B cell (primary cell): ENCODE measurements at regions of chr16 and their contacts with region 1.

Region 1: DNA sequence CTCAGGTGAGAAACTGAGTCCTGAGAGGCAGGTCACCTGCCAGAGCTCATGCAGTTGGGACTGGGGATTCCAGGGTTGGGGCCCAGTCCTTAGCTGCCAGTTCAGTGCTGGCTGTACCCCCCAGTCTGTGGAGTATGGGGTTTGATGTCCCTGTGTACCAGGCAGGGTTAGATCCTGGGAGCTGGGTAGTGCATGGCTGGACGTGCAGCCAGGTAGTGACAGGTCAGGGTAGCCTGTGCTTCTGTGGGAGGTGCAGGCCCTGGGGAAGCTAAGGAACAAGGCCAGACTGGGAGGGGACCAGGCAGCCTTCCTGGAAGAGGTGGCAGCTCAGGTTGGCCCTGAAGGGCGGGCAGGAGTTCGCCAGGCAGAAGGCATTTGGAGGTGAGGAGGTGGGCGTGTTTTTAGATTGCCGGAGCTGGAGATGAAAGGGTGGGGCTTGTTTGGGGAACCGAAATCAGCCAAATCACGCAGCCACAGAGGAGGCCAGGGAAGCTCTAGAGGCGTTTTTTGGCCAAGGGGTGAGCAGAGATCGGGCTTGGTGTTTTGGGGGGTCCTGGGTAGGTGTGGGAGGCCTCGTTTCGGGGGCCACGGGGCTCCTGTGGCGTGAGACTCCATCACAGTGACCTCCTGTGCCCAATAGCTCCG is 7.5 kb downstream of the ADCY7 start:
- DNase-seq: peak; percentile 88
- ATAC-seq: peak; percentile 81
- H3K4me3 ChIP-seq: peak overlapping the region; percentile 12 to 84 (median 80)
- H3K4me3 Mint-ChIP-seq: peak overlapping the region; percentile 98
- H3K27ac ChIP-seq: peak overlapping the region; percentile 93 to 97
- H3K27ac Mint-ChIP-seq: peak overlapping the region; percentile 100
- H3K4me1 ChIP-seq: peaks cover 63 to 74% of the 10 kb centered on the region in 2 donors
- H3K4me1 Mint-ChIP-seq: peaks cover 75% of the 10 kb centered on the region
- H3K27me3 ChIP-seq: no peaks in the 10 kb centered on the region
- H3K27me3 Mint-ChIP-seq: no peaks in the 10 kb centered on the region
- CTCF ChIP-seq: no peak

Region 2: GRCh38 chr16:50245417-50246298 is 28.1 kb before region 1 on chr16:
- CTCF ChIA-PET with region 1: interaction called, 20 read pairs
- POLR2A ChIA-PET with region 1: interaction called, 5 read pairs
- intact Hi-C with region 1: loop called (anchors 2 kb)
- DNase-seq: peak; percentile 57
- ATAC-seq: peak; percentile 94
- H3K4me3 ChIP-seq: peak overlapping the region in 4 of 5 experiments; percentile 60 to 69 (median 62)
- H3K4me3 Mint-ChIP-seq: peak overlapping the region; percentile 74
- H3K27ac ChIP-seq: no peak overlapping the region
- H3K27ac Mint-ChIP-seq: peak overlapping the region; percentile 50
- H3K4me1 ChIP-seq: peaks cover 6 to 15% of the 10 kb centered on the region in 2 donors
- H3K4me1 Mint-ChIP-seq: peaks cover 11% of the 10 kb centered on the region
- H3K27me3 ChIP-seq: peaks cover 0 to 11% (median 4%) of the 10 kb centered on the region in 4 experiments
- H3K27me3 Mint-ChIP-seq: no peaks in the 10 kb centered on the region
- CTCF ChIP-seq: peak; percentile 39

Region 3: DNA sequence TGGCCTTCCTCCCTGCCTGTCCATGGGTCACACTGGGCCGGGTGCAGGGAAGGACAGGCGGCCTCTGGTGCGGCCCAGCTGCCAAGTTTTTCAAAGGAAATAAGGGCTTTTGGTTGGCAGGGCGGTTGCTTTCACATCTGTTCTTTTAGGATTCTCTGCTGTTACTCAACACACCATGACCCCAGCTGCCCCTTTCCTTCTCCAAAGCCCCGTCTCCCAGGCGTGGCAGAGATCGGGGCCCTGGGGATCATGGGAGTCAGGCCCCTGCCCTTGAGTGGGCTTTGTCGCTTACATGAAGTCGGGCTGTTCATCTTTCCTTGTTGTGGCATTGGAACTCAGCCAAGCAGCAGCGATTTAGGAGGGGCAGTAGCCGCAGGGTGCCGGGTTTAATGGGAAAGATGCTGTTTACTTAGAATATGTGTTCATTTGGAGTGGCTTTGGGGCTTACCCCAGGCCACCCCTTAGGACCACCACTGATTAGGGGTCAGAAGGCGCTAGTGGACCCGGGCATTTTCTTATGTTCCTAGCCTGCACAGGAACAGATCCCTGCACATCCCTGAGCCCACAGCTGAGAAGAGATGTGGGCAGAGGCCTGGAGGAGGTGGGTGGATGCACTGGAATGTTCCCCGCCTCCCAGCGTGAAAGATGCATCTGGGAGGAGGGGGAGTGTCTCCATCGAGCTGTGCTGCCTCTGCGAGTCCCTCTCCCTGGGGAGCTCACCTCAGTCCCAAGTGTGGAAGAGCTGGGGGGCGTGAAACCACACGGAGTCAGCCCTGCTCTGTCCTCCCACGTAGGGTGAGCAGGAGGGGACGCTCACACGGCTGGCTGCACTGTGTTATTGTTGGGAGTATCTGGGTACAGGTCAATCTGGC is 14.2 kb before region 1 on chr16:
- CTCF ChIA-PET with region 1: interaction called, 63 read pairs
- POLR2A ChIA-PET with region 1: interaction called, 3 read pairs
- intact Hi-C with region 1: no loop called
- DNase-seq: no peak
- ATAC-seq: no peak
- H3K4me3 ChIP-seq: no peak overlapping the region
- H3K4me3 Mint-ChIP-seq: no peak overlapping the region
- H3K27ac ChIP-seq: no peak overlapping the region
- H3K27ac Mint-ChIP-seq: no peak overlapping the region
- H3K4me1 ChIP-seq: peaks cover 0 to 4% of the 10 kb centered on the region in 2 donors
- H3K4me1 Mint-ChIP-seq: peaks cover 20% of the 10 kb centered on the region
- H3K27me3 ChIP-seq: peaks cover 0 to 18% (median 8%) of the 10 kb centered on the region in 4 experiments
- H3K27me3 Mint-ChIP-seq: peaks cover 7% of the 10 kb centered on the region
- CTCF ChIP-seq: no peak

Region 4: DNA sequence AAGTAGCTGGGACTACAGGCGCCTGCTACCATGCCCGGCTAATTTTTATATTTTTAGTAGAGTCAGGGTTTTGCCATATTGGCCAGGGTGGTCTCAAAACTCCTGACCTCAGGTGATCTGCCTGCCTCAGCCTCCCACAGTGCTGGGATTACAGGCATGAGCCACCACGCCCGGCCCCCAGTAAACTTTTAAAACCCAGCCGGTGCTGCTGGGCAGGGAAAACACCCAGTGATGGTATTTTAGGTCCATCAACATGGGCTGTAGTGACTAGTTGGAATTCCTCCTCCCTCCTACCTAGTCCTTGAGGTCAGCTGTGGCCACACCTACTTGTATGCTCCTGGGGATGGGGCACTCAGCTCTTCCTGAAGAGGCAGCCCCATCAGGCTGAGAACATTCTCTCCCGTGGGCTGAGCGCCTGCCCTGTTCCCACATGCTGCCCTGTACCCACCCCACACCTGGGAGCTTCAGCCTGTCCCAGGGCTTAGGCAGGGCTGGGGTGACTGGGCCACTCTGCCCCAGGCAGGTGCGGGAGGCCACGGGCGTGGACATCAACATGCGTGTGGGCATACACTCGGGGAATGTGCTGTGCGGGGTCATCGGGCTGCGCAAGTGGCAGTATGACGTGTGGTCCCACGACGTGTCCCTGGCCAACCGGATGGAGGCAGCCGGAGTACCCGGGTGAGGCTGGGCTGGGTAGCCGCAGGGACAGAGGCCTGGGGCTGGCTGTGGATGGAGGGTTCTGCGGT is 26.6 kb after region 1 on chr16:
- CTCF ChIA-PET with region 1: no interaction called
- POLR2A ChIA-PET with region 1: no interaction called
- intact Hi-C with region 1: no loop called
- DNase-seq: no peak
- ATAC-seq: no peak
- H3K4me3 ChIP-seq: no peak overlapping the region
- H3K4me3 Mint-ChIP-seq: no peak overlapping the region
- H3K27ac ChIP-seq: no peak overlapping the region
- H3K27ac Mint-ChIP-seq: peak overlapping the region; percentile 32
- H3K4me1 ChIP-seq: no peaks in the 10 kb centered on the region
- H3K4me1 Mint-ChIP-seq: peaks cover 7% of the 10 kb centered on the region
- H3K27me3 ChIP-seq: no peaks in the 10 kb centered on the region
- H3K27me3 Mint-ChIP-seq: no peaks in the 10 kb centered on the region
- CTCF ChIP-seq: no peak

Region 5: DNA sequence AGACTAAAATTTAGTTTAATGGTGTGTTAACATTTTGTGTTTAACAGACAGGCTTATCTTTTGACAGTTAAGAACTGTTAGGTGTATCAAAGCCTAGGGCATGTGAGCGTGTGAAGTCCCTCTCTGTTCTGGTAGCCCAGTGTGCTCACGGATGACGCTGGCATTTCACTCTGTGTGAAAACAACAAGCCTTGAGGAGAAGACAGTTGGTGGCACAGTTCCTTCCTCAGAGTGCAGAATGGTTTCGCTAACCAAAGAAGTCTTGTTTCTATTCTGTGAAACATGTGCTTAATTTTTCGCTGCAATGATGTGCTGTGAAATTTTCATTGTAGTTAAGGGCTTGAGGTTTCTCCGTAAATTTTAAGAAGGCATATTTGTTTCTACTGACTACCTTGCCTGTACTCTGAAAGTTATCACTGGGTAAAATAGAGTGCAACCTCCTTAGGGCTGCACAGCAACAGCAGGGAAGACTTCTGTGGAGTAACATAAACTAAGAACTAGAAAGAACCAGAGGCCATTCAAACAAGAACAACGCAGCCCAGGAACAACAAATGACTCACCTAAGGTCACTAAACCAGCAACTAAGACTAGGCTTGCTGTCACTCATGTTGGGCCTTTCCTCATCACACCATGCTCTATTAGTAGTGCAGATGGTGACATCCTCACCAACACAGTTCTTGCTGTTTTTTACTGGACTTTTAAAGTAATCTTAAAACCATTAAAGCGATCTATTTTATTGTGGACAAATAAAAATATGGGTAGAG is 61.6 kb after region 1 on chr16:
- CTCF ChIA-PET with region 1: interaction called, 6 read pairs
- POLR2A ChIA-PET with region 1: no interaction called
- intact Hi-C with region 1: loop called (anchors 2 kb)
- DNase-seq: no peak
- ATAC-seq: peak; percentile 86
- H3K4me3 ChIP-seq: no peak overlapping the region
- H3K4me3 Mint-ChIP-seq: peak overlapping the region; percentile 75
- H3K27ac ChIP-seq: peak overlapping the region; percentile 73 to 90
- H3K27ac Mint-ChIP-seq: peak overlapping the region; percentile 96
- H3K4me1 ChIP-seq: peaks cover 0 to 63% of the 10 kb centered on the region in 2 donors
- H3K4me1 Mint-ChIP-seq: peaks cover 63% of the 10 kb centered on the region
- H3K27me3 ChIP-seq: no peaks in the 10 kb centered on the region
- H3K27me3 Mint-ChIP-seq: no peaks in the 10 kb centered on the region
- CTCF ChIP-seq: no peak